ENCODE measurements at regions of chr6 and their contacts with region 1.

Region 1: DNA sequence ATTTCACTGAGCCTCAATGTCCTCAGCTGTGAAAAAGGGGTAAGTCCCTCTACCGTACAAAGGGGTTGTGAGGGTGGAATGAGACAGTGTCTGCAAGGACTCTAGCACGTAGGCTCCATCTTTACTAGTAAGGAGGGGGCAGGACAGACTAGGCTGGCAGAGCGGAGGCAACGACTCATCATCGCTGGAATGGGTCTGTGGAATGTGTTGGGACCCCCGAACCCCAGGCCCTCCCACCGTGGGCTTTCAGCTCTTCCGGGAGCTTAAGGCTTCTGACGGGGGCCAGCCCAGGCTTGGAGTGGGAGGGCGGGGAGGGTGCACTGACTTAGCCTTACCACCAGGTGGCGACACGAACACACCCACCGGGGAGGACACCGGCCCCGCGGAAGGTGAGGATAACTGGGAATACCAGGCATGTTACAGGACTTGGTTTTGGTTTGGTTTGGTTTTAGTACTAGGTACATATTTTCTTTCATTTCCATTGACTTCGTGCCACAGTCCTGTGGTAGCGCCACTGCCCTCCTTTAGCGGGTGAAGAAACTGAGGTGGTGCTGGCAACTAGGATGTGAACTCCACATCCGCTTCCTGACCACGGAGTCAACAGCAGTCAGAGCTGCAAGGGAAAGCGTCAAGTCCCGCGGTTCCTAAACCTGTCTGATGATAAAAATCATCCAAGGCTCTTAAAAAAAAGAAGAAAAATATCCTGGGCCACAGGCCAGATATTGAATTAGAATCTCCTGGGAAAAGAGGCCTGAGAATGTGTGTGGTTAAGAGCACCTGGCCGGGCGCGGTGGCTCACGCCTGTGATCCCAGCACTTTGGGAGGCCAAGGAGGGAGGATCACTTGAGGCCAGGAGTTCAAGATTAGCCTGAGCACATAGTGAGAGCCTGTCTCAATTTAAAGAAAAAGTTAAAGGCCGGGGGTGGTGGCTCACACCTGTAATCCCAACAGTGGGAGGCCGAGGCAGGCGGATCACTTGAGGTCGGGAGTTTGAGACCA is 10.3 kb upstream of the TULP1 start:
- DNase-seq: peak; percentile 67 to 85 (median 77)
- H3K4me3 ChIP-seq: peak overlapping the region; percentile 26
- H3K4me3 Mint-ChIP-seq: peak overlapping the region; percentile 25 to 79 (median 71)
- H3K27ac ChIP-seq: no peak overlapping the region
- H3K27ac Mint-ChIP-seq: peak overlapping the region; percentile 48 to 95 (median 88)
- H3K4me1 ChIP-seq: peaks cover 27% of the 10 kb centered on the region
- H3K4me1 Mint-ChIP-seq: peaks cover 24 to 31% (median 30%) of the 10 kb centered on the region in 3 donors
- H3K27me3 ChIP-seq: no peaks in the 10 kb centered on the region
- H3K27me3 Mint-ChIP-seq: peaks cover 0 to 2% of the 10 kb centered on the region in 2 donors

Region 2: GRCh38 chr6:35342258-35343091 is 180.5 kb before region 1 on chr6 and contains the start of gene PPARD:
- CTCF ChIA-PET with region 1: no interaction called
- POLR2A ChIA-PET with region 1: no interaction called
- DNase-seq: peak; percentile 96 to 98 (median 97)
- H3K4me3 ChIP-seq: peak within 1 kb of the TSS; percentile 90
- H3K4me3 Mint-ChIP-seq: peak within 1 kb of the TSS; percentile 86 to 98 (median 95)
- H3K27ac ChIP-seq: peak within 1 kb of the TSS; percentile 79
- H3K27ac Mint-ChIP-seq: peak within 1 kb of the TSS; percentile 80 to 98 (median 95)
- H3K4me1 ChIP-seq: peaks cover 51% of the 10 kb centered on the region
- H3K4me1 Mint-ChIP-seq: peaks cover 45 to 55% (median 50%) of the 10 kb centered on the region in 3 donors
- H3K27me3 ChIP-seq: no peaks in the 10 kb centered on the region
- H3K27me3 Mint-ChIP-seq: peaks cover 0 to 1% of the 10 kb centered on the region in 2 donors
- total RNA-seq, gene PPARD: 14.8 to 16.2 TPM

Region 3: GRCh38 chr6:35435074-35435837 is 87.7 kb before region 1 on chr6:
- CTCF ChIA-PET with region 1: no interaction called
- POLR2A ChIA-PET with region 1: no interaction called
- DNase-seq: no peak
- H3K4me3 ChIP-seq: no peak overlapping the region
- H3K4me3 Mint-ChIP-seq: no peak overlapping the region
- H3K27ac ChIP-seq: no peak overlapping the region
- H3K27ac Mint-ChIP-seq: peak overlapping the region in 1 of 8 donors; percentile 74
- H3K4me1 ChIP-seq: no peaks in the 10 kb centered on the region
- H3K4me1 Mint-ChIP-seq: no peaks in the 10 kb centered on the region
- H3K27me3 ChIP-seq: no peaks in the 10 kb centered on the region
- H3K27me3 Mint-ChIP-seq: no peaks in the 10 kb centered on the region

Region 4: DNA sequence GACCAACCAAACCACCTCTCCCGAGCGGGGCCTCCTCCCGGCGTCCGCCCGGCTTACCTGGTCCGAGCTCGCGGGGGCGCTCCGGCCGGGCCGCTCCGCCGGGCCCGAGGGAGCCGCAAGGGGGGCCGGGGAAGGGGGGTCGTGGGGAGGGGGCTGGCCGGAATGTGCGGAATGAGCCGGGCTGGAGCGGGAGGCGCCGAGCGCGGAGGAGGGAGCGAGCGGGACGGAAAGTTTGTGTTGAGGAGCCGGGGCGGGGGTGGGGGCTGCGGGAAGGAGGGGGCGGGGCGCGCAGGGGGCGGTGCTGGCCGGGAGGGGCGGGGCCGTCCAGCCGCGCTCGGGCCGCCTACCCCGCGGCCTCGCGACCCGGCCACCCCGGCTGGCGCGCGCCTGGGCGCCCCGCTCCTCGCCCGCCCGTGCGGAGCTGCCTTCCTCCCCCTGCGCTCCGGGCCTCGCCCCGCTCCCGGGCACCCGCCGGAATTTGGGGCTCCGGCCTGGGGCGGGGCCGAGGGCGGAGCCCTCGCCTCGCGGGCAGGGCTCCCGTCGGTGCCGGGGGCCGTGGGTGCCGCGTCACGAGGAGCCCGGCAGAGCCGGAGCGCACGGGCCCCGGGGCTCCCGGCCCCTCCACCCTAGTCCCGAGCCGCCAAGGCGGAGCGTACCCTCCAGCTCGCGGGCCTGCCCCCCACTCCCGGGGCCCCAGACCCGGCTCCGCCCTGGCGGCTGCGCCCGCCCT is 26.0 kb before region 1 on chr6 and contains the start of gene TEAD3:
- CTCF ChIA-PET with region 1: interaction called, 12 read pairs
- POLR2A ChIA-PET with region 1: no interaction called
- DNase-seq: peak; percentile 32 to 59 (median 51)
- H3K4me3 ChIP-seq: peak within 1 kb of the TSS; percentile 50
- H3K4me3 Mint-ChIP-seq: peak within 1 kb of the TSS; percentile 80 to 91 (median 83)
- H3K27ac ChIP-seq: peak within 1 kb of the TSS; percentile 57
- H3K27ac Mint-ChIP-seq: peak within 1 kb of the TSS in 4 of 8 donors; percentile 33 to 74 (median 62)
- H3K4me1 ChIP-seq: peaks cover 10% of the 10 kb centered on the region
- H3K4me1 Mint-ChIP-seq: peaks cover 18 to 43% (median 24%) of the 10 kb centered on the region in 3 donors
- H3K27me3 ChIP-seq: peaks cover 8% of the 10 kb centered on the region
- H3K27me3 Mint-ChIP-seq: peaks cover 5 to 24% of the 10 kb centered on the region in 2 donors
- total RNA-seq, gene TEAD3: 0.53 to 0.90 TPM

Region 5: GRCh38 chr6:35552285-35552917 is 29.4 kb after region 1 on chr6:
- CTCF ChIA-PET with region 1: interaction called, 21 read pairs
- POLR2A ChIA-PET with region 1: interaction called, 3 read pairs
- DNase-seq: peak; percentile 43 to 68 (median 60)
- H3K4me3 ChIP-seq: no peak overlapping the region
- H3K4me3 Mint-ChIP-seq: peak overlapping the region in 1 of 7 donors; percentile 35
- H3K27ac ChIP-seq: no peak overlapping the region
- H3K27ac Mint-ChIP-seq: no peak overlapping the region
- H3K4me1 ChIP-seq: no peaks in the 10 kb centered on the region
- H3K4me1 Mint-ChIP-seq: peaks cover 6 to 8% (median 7%) of the 10 kb centered on the region in 3 donors
- H3K27me3 ChIP-seq: no peaks in the 10 kb centered on the region
- H3K27me3 Mint-ChIP-seq: peaks cover 14 to 24% of the 10 kb centered on the region in 2 donors

Region 6: GRCh38 chr6:35576682-35577081 is 53.7 kb after region 1 on chr6:
- CTCF ChIA-PET with region 1: no interaction called
- POLR2A ChIA-PET with region 1: no interaction called
- DNase-seq: no peak
- H3K4me3 ChIP-seq: no peak overlapping the region
- H3K4me3 Mint-ChIP-seq: no peak overlapping the region
- H3K27ac ChIP-seq: no peak overlapping the region
- H3K27ac Mint-ChIP-seq: no peak overlapping the region
- H3K4me1 ChIP-seq: peaks cover 2% of the 10 kb centered on the region
- H3K4me1 Mint-ChIP-seq: peaks cover 0 to 4% (median 4%) of the 10 kb centered on the region in 3 donors
- H3K27me3 ChIP-seq: no peaks in the 10 kb centered on the region
- H3K27me3 Mint-ChIP-seq: no peaks in the 10 kb centered on the region

Region 7: GRCh38 chr6:35669451-35670045 is 146.6 kb after region 1 on chr6:
- CTCF ChIA-PET with region 1: no interaction called
- POLR2A ChIA-PET with region 1: no interaction called
- DNase-seq: peak in 1 of 5 donors; percentile 34
- H3K4me3 ChIP-seq: peak overlapping the region; percentile 33
- H3K4me3 Mint-ChIP-seq: peak overlapping the region; percentile 35 to 81 (median 77)
- H3K27ac ChIP-seq: peak overlapping the region; percentile 9
- H3K27ac Mint-ChIP-seq: peak overlapping the region; percentile 61 to 93 (median 88)
- H3K4me1 ChIP-seq: peaks cover 74% of the 10 kb centered on the region
- H3K4me1 Mint-ChIP-seq: peaks cover 45 to 71% (median 71%) of the 10 kb centered on the region in 3 donors
- H3K27me3 ChIP-seq: no peaks in the 10 kb centered on the region
- H3K27me3 Mint-ChIP-seq: no peaks in the 10 kb centered on the region

Measured in CD8-positive, alpha-beta memory T cell (primary cell).